Right cardiac atrium (tissue), 5 donors: ENCODE measurements at regions of chr12 and their contacts with region 1.

Region 1: DNA sequence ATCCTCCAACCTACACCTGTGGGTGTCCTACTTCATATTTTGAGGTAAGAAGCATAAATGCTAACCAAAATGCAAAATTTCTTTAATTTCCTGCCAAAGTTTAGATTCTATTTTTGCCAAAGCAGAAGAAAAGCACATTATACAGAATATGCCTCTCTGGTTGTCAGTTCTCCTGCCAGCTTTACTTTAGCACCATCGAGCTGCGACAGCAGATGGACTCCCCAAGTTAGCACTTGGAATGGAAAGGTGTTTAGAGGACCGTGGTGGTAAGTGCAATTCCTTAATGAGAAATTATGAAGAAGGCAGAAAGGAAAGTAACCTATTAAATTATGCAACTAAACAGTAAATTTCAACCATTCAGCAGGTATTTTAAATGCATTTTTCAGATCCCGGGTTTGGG is 326.6 kb downstream of the RERGL start:
- DNase-seq: no peak
- ATAC-seq: no peak
- H3K4me3 ChIP-seq: no peak overlapping the region
- H3K27ac ChIP-seq: no peak overlapping the region
- H3K4me1 ChIP-seq: no peaks in the 10 kb centered on the region
- H3K27me3 ChIP-seq: no peaks in the 10 kb centered on the region

Region 2: GRCh38 chr12:17691369-17691768 is 72.0 kb before region 1 on chr12:
- intact Hi-C with region 1: no loop called
- DNase-seq: no peak
- ATAC-seq: no peak
- H3K4me3 ChIP-seq: no peak overlapping the region
- H3K27ac ChIP-seq: no peak overlapping the region
- H3K4me1 ChIP-seq: no peaks in the 10 kb centered on the region
- H3K27me3 ChIP-seq: no peaks in the 10 kb centered on the region

Region 3: DNA sequence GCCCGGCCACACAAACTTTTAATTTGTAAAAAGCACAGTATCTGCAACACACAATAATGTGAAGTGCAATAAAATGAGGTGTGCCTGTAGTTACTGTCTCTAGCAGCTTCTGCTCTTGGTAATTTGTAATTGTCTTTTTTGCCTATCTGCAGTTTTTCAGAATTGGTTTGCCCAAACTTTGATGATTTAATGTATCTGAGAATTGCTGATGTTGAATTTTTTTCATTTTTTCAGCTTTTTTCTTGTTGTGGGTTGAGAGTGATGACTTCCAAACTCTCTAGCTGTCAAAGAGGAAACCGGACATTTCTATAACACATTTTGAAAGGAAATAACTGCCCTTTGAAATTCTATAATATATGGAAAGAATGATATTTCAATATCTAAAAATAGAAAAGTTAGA is 89.7 kb after region 1 on chr12:
- intact Hi-C with region 1: loop called (anchors 5 kb)
- DNase-seq: no peak
- ATAC-seq: no peak
- H3K4me3 ChIP-seq: no peak overlapping the region
- H3K27ac ChIP-seq: no peak overlapping the region
- H3K4me1 ChIP-seq: no peaks in the 10 kb centered on the region
- H3K27me3 ChIP-seq: no peaks in the 10 kb centered on the region